Mammary epithelial cell (primary cell): ENCODE measurements at regions of chr19 and their contacts with region 1.

Region 1: DNA sequence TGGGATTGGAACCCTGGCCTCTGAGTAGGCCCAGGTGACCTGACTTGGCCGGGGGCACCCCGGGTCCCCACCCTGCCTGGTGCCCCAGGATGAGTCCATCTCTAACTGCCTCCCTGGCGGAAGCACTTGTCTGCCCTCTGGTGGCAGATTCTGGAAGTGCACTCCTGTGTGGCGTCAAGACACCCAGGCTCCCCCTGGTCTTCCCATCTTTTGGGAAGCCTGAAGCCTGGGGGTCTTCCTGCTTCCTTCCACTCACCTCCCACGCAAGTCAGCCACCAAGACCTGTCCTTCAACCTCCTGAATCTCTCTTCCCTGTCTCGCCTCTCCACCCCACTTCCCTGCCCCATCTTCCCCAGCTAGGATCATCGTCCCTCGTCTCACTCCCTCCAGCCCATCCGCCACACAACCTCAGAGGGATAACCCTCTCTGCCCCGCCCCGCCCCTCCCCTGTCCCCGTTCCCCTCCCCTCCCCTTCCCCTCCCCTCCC is 7.4 kb downstream of the RABAC1 start:
- DNase-seq: peak; percentile 48
- H3K4me3 ChIP-seq: no peak overlapping the region
- H3K27ac ChIP-seq: no peak overlapping the region
- H3K4me1 ChIP-seq: no peaks in the 10 kb centered on the region
- H3K27me3 ChIP-seq: no peaks in the 10 kb centered on the region
- CTCF ChIP-seq: peak; percentile 97 to 99

Region 2: DNA sequence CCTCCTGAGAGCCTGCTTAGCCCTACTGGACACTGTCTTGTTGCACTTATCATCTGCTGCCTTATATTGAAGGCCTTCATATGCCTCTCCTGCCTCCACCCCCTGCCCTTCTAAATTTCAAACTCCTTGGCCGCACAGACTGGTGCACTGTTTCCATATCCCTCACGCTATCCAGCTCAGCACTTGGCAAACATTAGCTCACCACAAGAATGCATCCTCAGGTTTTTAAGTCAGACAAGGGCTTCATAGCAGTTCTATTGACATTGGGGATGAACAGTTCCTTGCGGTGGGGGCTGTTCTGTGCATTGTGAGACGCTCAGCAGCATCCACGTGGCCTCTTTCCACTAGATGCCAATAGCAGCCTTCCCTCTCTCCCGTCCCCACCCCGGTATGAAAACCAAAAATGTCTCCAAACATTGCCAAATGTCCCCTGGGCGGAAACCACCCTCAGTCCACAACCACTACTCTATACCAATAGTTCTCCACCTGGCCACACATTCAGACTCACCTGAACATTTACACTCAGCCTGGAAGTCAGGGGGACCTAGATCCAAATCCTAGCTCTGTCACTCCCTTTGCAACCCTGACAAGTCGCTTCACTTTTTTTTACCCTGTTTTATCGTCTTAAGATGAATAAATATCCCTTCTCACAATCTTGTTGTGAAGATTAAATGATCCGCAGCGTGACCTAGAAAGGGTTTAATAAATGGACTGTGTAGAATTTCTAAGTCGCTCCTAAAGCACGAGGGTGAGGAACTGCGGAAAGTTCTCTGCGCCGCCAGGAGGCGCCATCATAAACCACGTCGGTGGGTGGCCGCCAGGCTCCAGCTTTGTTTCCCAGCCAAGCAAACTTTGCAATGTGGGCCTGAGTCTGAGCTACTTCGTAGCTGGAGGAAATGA is 159.0 kb before region 1 on chr19:
- CTCF ChIA-PET with region 1: no interaction called
- dilution Hi-C with region 1: no loop called
- in situ Hi-C with region 1: no loop called
- intact Hi-C with region 1: loop called (anchors 1 kb)
- DNase-seq: peak; percentile 35
- H3K4me3 ChIP-seq: no peak overlapping the region
- H3K27ac ChIP-seq: no peak overlapping the region
- H3K4me1 ChIP-seq: no peaks in the 10 kb centered on the region
- H3K27me3 ChIP-seq: peaks cover 2% of the 10 kb centered on the region
- CTCF ChIP-seq: peak; percentile 62 to 73

Region 3: GRCh38 chr19:41859618-41860418 is 91.9 kb before region 1 on chr19 and contains the start of gene RPS19:
- CTCF ChIA-PET with region 1: no interaction called
- dilution Hi-C with region 1: no loop called
- in situ Hi-C with region 1: no loop called
- intact Hi-C with region 1: loop called (anchors 1 kb)
- DNase-seq: peak; percentile 99
- H3K4me3 ChIP-seq: peak within 1 kb of the TSS; percentile 77 to 92 (median 84)
- H3K27ac ChIP-seq: peak within 1 kb of the TSS; percentile 93
- H3K4me1 ChIP-seq: peaks cover 30% of the 10 kb centered on the region
- H3K27me3 ChIP-seq: no peaks in the 10 kb centered on the region
- CTCF ChIP-seq: peak; percentile 43 to 62
- total RNA-seq, gene RPS19: 530 to 2,153 TPM

Region 4: GRCh38 chr19:41872775-41873647 is 78.7 kb before region 1 on chr19:
- CTCF ChIA-PET with region 1: no interaction called
- dilution Hi-C with region 1: loop called (anchors 5 kb)
- in situ Hi-C with region 1: loop called in 1 of 2 experiments (anchors 5 kb)
- intact Hi-C with region 1: loop called (anchors 1 kb)
- DNase-seq: peak; percentile 77
- H3K4me3 ChIP-seq: no peak overlapping the region
- H3K27ac ChIP-seq: no peak overlapping the region
- H3K4me1 ChIP-seq: no peaks in the 10 kb centered on the region
- H3K27me3 ChIP-seq: no peaks in the 10 kb centered on the region
- CTCF ChIP-seq: peak; percentile 79 to 83

Region 5: GRCh38 chr19:41934849-41935374 is 16.8 kb before region 1 on chr19:
- CTCF ChIA-PET with region 1: no interaction called
- dilution Hi-C with region 1: no loop called
- in situ Hi-C with region 1: no loop called
- intact Hi-C with region 1: loop called (anchors 2 kb)
- DNase-seq: peak; percentile 44
- H3K4me3 ChIP-seq: no peak overlapping the region
- H3K27ac ChIP-seq: no peak overlapping the region
- H3K4me1 ChIP-seq: peaks cover 11% of the 10 kb centered on the region
- H3K27me3 ChIP-seq: peaks cover 24% of the 10 kb centered on the region
- CTCF ChIP-seq: peak; percentile 88 to 91